ENCODE measurements at regions of chr16 and their contacts with region 1.

Region 1: GRCh38 chr16:57084257-57084770 is 8.1 kb upstream of the CPNE2 start:
- DNase-seq: peak; percentile 87
- ATAC-seq: peak; percentile 75
- H3K4me3 Mint-ChIP-seq: no peak overlapping the region
- H3K27ac Mint-ChIP-seq: peak overlapping the region; percentile 74
- H3K4me1 Mint-ChIP-seq: peaks cover 8% of the 10 kb centered on the region
- H3K27me3 Mint-ChIP-seq: peaks cover 5% of the 10 kb centered on the region

Region 2: DNA sequence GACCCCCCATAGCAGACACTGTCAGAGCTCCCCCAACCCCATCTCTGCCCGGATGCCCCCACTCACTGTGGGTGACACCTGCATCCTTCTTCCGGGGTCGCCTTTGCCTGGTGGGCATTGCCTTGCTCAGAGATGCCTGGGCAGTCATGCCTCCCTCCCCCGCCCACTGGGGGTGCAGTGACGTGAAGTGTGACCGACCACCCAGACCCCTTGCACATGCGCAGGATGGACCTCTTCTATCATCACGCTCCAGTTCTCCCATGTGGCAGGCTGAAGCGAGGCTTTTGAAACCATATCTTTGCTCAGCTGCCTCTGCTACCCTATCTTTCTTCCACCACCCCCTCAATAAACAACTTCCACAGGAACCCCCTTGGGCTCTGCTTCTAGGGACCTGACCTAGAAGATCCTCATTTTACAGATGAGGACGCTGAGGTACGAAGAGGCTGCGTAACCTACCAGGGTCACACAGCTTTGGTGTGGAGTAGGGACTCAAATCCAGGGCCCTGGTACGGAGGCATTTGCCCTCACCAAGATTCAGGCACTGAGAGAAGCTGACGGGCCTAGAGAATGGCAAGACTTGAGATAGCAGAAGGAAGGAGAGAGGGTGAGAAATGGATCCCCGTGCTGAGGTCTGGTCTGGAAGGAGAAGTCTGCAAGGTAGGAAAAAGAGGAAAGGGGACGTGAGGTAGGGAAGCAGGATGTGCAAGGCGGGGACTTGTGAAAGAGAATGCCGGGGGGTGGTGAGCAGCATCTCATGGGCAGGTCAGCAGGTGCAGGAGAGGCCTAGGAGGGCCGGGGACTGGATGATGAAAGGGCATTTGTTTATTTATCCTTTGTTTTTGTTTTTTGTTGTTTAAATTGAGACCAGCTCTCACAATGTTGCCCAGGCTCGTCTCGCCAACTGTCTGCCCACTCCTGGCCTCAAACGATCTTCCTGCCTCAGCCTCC is 80.6 kb before region 1 on chr16:
- CTCF ChIA-PET with region 1: no interaction called
- POLR2A ChIA-PET with region 1: no interaction called
- DNase-seq: no peak
- ATAC-seq: no peak
- H3K4me3 Mint-ChIP-seq: no peak overlapping the region
- H3K27ac Mint-ChIP-seq: peak overlapping the region; percentile 64
- H3K4me1 Mint-ChIP-seq: peaks cover 86% of the 10 kb centered on the region
- H3K27me3 Mint-ChIP-seq: no peaks in the 10 kb centered on the region

Region 3: GRCh38 chr16:57069635-57070370 is 14.5 kb before region 1 on chr16:
- CTCF ChIA-PET with region 1: interaction called, 11 read pairs
- POLR2A ChIA-PET with region 1: interaction called, 4 read pairs
- DNase-seq: no peak
- ATAC-seq: no peak
- H3K4me3 Mint-ChIP-seq: no peak overlapping the region
- H3K27ac Mint-ChIP-seq: peak overlapping the region; percentile 75
- H3K4me1 Mint-ChIP-seq: peaks cover 37% of the 10 kb centered on the region
- H3K27me3 Mint-ChIP-seq: no peaks in the 10 kb centered on the region

Region 4: GRCh38 chr16:57128771-57129389 is 44.6 kb after region 1 on chr16:
- CTCF ChIA-PET with region 1: interaction called, 20 read pairs
- POLR2A ChIA-PET with region 1: interaction called, 3 read pairs
- DNase-seq: peak; percentile 83
- ATAC-seq: peak; percentile 75
- H3K4me3 Mint-ChIP-seq: peak overlapping the region; percentile 71
- H3K27ac Mint-ChIP-seq: peak overlapping the region; percentile 96
- H3K4me1 Mint-ChIP-seq: peaks cover 86% of the 10 kb centered on the region
- H3K27me3 Mint-ChIP-seq: no peaks in the 10 kb centered on the region

Region 5: DNA sequence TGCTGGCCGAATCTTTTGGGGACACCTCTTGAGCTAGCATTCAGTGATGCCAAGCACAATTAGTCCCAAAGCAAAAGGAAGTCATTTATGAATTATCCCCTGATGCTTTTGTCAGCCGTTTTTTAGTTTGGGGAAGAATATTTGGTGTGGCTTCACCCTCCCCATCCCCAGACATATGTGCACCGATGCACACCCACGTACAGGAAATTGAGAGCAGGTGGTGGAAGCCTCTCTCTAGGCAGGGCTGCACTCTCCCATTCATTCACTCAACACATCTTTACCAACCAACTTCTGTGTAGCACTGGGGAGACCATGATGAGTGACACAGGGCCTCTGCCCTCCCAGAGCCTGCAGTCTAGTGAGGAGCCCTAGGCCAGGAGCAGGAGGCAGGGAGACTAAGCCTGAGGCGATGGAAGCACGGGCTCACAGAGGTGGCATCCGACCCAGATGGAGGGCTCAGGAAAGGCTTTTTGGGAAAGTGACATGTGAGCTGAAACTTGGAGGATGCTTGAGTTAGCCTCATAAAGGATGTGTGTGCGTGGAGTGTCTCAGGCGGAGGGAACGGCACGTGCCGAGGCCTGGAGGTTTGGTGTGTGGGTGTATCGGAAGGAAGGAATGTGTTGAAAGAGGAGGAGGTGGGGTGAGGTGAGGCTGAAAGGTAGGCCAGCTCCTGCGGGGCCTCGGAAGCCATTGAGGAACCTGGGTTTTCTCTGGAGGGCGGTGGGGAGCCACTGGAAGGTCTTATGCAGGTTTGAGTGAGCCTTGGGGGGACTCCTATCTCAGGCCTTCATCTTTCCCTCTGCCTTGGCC is 57.7 kb after region 1 on chr16:
- CTCF ChIA-PET with region 1: interaction called, 20 read pairs
- POLR2A ChIA-PET with region 1: interaction called, 3 read pairs
- DNase-seq: no peak
- ATAC-seq: peak; percentile 71
- H3K4me3 Mint-ChIP-seq: no peak overlapping the region
- H3K27ac Mint-ChIP-seq: peak overlapping the region; percentile 76
- H3K4me1 Mint-ChIP-seq: peaks cover 39% of the 10 kb centered on the region
- H3K27me3 Mint-ChIP-seq: no peaks in the 10 kb centered on the region

Region 6: GRCh38 chr16:57185944-57186871 is 101.9 kb after region 1 on chr16 and contains the starts of genes PSME3IP1 and RSPRY1:
- CTCF ChIA-PET with region 1: interaction called, 10 read pairs
- POLR2A ChIA-PET with region 1: interaction called, 3 read pairs
- DNase-seq: peak; percentile 100
- ATAC-seq: peak; percentile 95
- H3K4me3 Mint-ChIP-seq: peak within 1 kb of the TSS; percentile 94
- H3K27ac Mint-ChIP-seq: peak within 1 kb of the TSS; percentile 97
- H3K4me1 Mint-ChIP-seq: peaks cover 39% of the 10 kb centered on the region
- H3K27me3 Mint-ChIP-seq: no peaks in the 10 kb centered on the region
- total RNA-seq, gene PSME3IP1: 106 to 113 TPM
- total RNA-seq, gene RSPRY1: 30.9 to 35.8 TPM

Region 7: DNA sequence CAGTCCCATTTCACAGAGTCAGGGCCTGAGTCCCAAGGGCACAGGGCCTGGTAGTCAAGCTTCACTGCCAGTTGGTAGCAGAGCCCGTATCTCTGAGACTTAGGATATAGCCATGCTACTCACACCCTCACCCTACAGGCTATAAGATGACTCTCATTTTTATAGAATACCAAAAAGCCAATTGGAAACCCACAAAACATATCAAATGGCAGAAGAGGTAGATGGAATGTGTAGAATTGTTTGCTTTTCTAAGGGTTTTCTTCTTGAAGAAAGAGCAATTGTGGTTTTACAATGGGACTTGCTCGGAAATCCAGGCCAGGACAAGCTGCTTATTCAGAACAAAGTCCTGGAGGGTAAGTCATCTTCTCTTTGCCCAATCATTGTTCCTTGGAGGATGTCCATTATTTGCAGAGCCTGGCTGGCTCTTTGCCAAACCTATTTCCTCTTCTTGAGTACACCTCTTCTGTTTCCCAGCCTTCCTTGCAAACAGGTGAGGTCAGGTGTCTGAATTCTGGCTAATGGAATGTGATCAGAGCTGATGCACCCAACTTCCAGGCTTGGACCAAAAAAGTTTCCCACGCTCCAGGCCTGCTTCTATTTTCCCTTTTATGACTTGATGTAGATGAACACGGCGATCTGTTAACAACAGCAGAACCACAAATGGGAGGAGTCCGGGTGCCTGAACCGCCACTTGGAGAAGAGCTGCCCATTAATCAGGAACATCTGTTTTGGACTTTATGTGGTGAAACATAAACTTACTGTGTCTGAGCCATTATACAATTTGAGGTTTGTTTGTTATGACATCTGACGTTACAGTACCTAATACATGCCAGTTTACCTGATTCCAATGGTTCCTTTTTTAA is 257.4 kb after region 1 on chr16:
- CTCF ChIA-PET with region 1: no interaction called
- POLR2A ChIA-PET with region 1: no interaction called
- DNase-seq: no peak
- ATAC-seq: no peak
- H3K4me3 Mint-ChIP-seq: no peak overlapping the region
- H3K27ac Mint-ChIP-seq: no peak overlapping the region
- H3K4me1 Mint-ChIP-seq: peaks cover 7% of the 10 kb centered on the region
- H3K27me3 Mint-ChIP-seq: peaks cover 18% of the 10 kb centered on the region

Measured in activated CD8-positive, alpha-beta T cell treated with anti-CD3 and anti-CD28 coated beads, Interleukin-2, amount 10 ng/mL, durations not matched to agents 7 days and 5 days (primary cell).